ENCODE measurements at regions of chr1 and their contacts with region 1.

Region 1: GRCh38 chr1:30801771-30802198 is 44.2 kb upstream of the LAPTM5 start:
- DNase-seq: peak; percentile 60
- H3K4me3 Mint-ChIP-seq: no peak overlapping the region
- H3K27ac Mint-ChIP-seq: no peak overlapping the region
- H3K4me1 Mint-ChIP-seq: peaks cover 4% of the 10 kb centered on the region
- H3K27me3 Mint-ChIP-seq: peaks cover 35% of the 10 kb centered on the region

Region 2: DNA sequence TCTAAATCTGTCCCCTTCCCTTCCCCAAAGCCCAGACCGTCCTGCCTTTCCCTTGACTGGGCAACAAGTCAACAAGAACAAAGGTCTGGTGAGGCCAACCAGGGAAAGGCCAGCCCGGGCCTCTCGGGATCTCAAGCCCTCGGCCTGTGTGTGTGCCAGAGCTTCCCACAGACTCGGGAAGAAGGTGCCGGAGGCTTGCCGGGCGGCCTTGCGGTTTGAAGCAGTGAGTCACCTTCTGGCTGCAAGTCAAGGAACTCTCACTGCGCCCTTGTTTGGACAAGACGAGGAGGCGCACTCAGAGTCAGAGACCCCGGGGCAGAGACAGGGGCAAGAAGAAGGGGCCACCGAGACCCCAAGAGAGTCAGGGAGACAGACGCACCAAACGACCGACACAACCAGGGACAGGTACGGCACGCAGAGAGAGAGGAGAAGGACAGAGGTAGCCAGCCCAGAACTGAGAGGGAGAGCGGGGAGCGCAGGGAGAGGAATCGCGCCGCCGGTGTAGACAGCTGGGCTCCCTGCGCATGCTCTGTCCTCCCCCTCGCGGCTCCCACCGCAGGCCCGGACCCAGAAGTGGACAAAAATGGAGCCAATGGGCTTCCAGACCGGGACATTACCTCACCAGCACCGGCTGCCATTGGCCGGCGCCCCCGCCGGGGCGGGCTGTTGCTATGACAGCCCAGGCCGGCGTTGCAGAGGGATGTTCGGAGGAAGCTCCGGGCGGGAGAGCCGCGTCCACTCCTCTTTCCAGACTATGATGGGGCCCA is 22.4 kb after region 1 on chr1:
- intact Hi-C with region 1: no loop called
- DNase-seq: peak; percentile 60
- H3K4me3 Mint-ChIP-seq: peak overlapping the region; percentile 75
- H3K27ac Mint-ChIP-seq: no peak overlapping the region
- H3K4me1 Mint-ChIP-seq: peaks cover 18% of the 10 kb centered on the region
- H3K27me3 Mint-ChIP-seq: peaks cover 62% of the 10 kb centered on the region

Region 3: DNA sequence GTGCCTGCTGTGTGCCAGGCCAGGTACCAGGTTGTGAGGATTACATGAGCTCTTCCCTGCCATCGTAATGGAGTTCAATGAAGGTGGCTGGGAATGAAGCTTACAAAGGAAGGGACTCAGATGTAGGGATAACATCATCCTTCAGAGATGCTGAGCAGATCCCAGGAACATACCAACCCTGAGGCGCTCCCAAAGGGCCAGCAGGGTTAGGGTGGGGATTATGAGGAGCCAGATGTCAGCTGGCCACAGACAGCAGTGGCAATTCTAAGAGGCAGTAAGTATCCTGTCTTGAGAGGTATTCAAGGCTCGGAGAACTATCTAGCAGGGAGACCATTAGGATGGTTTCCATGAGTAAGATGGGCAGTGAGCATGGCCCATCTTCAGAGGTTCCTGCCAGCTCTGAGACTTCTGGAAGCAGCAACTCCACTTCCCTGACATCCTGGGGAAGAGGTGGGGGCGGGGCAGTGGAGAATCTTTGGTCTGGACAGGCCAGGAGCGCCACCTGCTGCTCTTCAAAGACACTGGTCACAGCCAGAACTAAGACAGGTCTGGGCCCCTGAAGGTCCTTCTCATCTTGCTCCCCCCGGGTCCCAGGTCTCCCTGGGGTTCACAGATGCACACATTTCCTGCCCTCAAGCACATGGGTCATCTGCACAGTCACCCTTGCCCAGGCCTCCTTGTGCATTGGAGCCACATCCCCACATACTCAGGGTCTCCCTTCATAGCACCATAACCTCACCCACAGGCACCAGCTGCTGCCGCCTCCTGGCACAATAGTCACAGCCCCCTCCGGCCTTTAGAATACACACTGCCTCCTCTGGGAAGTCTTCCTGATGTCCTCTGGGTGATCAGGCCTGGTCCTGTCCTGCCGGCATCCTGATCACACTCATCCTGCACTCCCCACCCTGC is 109.5 kb after region 1 on chr1:
- intact Hi-C with region 1: loop called (anchors 1 kb)
- DNase-seq: peak; percentile 36
- H3K4me3 Mint-ChIP-seq: no peak overlapping the region
- H3K27ac Mint-ChIP-seq: no peak overlapping the region
- H3K4me1 Mint-ChIP-seq: peaks cover 11% of the 10 kb centered on the region
- H3K27me3 Mint-ChIP-seq: peaks cover 30% of the 10 kb centered on the region

Region 4: GRCh38 chr1:30929135-30929889 is 127.5 kb after region 1 on chr1:
- intact Hi-C with region 1: loop called (anchors 5 kb)
- DNase-seq: no peak
- H3K4me3 Mint-ChIP-seq: no peak overlapping the region
- H3K27ac Mint-ChIP-seq: no peak overlapping the region
- H3K4me1 Mint-ChIP-seq: no peaks in the 10 kb centered on the region
- H3K27me3 Mint-ChIP-seq: peaks cover 4% of the 10 kb centered on the region